Colonic mucosa (tissue), 4 donors: ENCODE measurements at regions of chr1 and their contacts with region 1.

Region 1: DNA sequence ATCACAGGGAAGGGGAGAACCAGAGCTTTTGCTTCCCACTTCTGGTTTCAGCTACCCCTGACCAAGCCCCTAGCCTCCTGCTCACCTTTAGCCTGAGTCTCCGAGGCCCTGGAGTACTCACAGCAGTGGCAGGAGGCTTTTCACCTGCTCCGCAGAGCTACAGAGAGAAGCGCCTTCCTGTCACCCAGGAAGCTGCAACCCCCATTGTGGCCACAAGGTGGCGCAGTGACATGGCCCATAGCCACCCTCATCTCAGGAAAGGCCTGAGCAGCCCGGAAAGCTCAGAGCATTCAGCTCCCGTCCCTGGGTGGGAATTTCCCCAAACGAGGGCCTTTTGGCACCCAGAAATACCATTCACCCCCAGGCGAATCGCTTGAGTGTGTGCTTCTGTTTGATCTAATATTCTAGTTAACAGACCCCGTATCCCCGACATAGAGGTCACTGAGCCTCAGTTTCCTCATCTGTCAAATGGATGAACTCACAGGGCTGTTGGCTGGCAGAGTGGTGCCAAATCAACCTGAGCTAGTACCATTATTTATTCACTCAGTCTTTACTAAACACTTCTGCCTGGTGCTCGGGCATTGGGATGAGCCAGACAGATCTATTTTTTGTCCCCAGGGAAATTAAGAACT is 25.3 kb downstream of the A3GALT2 start:
- DNase-seq: peak; percentile 90
- H3K4me3 ChIP-seq: no peak overlapping the region
- H3K27ac ChIP-seq: no peak overlapping the region
- H3K4me1 ChIP-seq: no peaks in the 10 kb centered on the region
- H3K27me3 ChIP-seq: no peaks in the 10 kb centered on the region
- CTCF ChIP-seq: peak; percentile 97

Region 2: DNA sequence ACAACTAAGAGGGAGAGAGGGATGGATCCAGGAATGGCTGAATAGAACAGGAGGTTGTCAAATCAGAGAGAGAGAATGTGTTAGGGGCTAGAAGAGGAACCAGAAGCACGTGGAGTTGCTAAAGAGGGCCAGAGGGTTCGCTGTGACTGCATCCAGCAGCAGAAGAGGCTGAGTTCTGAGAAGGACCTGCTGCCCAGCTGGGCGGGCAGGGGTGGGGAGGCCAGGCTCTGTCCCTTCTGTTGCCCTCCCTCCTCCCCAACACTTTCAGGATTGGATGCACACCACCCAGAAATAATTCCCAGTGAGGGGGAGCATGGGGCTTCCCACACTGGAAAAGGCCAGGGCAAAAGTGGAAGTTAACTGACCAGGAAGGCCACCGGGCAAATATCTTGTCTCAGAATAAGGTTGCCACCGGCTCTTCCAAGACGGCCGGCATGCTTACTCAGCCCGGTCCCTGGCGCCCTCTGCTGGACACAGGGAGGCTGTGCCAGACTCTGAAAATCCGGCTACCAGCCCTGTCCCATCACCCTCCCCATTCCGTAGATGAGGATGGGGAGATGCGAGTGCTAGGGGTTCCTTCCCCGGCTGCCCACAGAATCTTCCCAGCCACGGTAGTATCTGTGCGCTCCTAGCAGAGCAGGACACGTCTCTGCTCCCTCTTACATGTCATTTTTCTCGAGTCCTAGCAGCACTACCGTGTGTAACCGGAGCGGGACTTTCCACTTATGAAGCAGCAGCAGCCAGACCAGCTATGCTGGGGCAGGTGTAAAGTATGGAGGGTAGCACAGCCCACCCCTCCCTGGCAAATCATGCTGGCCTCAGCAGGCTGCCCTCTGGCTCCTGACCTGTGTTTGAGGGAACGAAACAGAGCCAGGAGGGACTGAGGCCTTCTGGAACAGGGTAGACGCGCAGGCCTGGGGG is 72.2 kb after region 1 on chr1:
- intact Hi-C with region 1: loop called (anchors 2 kb)
- DNase-seq: peak; percentile 91
- H3K4me3 ChIP-seq: no peak overlapping the region
- H3K27ac ChIP-seq: no peak overlapping the region
- H3K4me1 ChIP-seq: no peaks in the 10 kb centered on the region
- H3K27me3 ChIP-seq: no peaks in the 10 kb centered on the region
- CTCF ChIP-seq: peak; percentile 94

Region 3: GRCh38 chr1:33384040-33384812 is 88.7 kb after region 1 on chr1:
- intact Hi-C with region 1: no loop called
- DNase-seq: no peak
- H3K4me3 ChIP-seq: no peak overlapping the region
- H3K27ac ChIP-seq: no peak overlapping the region
- H3K4me1 ChIP-seq: no peaks in the 10 kb centered on the region
- H3K27me3 ChIP-seq: no peaks in the 10 kb centered on the region
- CTCF ChIP-seq: no peak

Region 4: DNA sequence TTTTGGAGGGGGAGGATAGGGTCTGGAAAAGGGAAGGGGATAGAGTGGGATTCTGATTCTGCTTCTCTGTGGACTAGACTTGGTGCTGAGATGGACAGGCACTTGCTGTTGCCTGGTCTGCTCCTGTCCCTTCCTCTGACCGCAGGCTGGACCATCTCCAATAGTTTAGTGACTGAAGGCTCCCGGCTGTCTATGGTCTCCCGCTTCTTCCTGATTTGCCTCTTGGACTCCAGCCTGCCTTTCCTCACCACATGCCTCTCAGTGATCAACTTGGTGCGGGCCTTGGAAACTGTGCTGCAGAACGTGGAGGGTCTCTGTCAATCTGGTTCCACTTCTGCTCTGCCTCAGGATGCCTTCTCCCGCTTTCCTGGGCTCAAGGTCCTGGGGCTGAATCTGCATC is 170.6 kb after region 1 on chr1:
- intact Hi-C with region 1: loop called (anchors 5 kb)
- DNase-seq: no peak
- H3K4me3 ChIP-seq: no peak overlapping the region
- H3K27ac ChIP-seq: no peak overlapping the region
- H3K4me1 ChIP-seq: no peaks in the 10 kb centered on the region
- H3K27me3 ChIP-seq: no peaks in the 10 kb centered on the region
- CTCF ChIP-seq: no peak

Region 5: GRCh38 chr1:33616773-33617172 is 321.2 kb after region 1 on chr1:
- intact Hi-C with region 1: loop called (anchors 10 kb)
- DNase-seq: no peak
- H3K4me3 ChIP-seq: no peak overlapping the region
- H3K27ac ChIP-seq: no peak overlapping the region
- H3K4me1 ChIP-seq: no peaks in the 10 kb centered on the region
- H3K27me3 ChIP-seq: no peaks in the 10 kb centered on the region
- CTCF ChIP-seq: no peak

Region 6: DNA sequence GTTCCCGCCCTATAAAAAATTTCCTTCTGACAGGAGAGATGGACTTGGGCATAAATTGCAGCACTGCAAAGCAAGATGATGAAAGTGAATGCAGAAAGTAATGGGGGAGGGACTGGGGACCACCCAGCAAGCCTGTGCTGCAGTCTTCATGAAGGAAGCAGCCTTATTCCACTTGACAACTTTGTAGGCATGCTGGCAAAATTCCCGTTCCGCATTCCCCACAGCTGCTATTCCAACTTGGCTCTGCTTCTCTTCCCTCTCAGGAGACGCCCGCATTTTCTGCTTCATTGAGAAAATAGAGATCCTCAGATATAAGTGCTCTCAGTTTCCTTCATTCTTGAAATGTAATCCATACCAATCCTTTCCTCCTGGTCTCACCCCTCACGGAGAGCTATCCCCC is 570.7 kb after region 1 on chr1:
- intact Hi-C with region 1: no loop called
- DNase-seq: no peak
- H3K4me3 ChIP-seq: no peak overlapping the region
- H3K27ac ChIP-seq: no peak overlapping the region
- H3K4me1 ChIP-seq: no peaks in the 10 kb centered on the region
- H3K27me3 ChIP-seq: no peaks in the 10 kb centered on the region
- CTCF ChIP-seq: no peak